Naive thymus-derived CD4-positive, alpha-beta T cell (primary cell): ENCODE measurements at regions of chr1 and their contacts with region 1.

Region 1: GRCh38 chr1:100351095-100351891 is 1.0 kb upstream of the CDC14A start:
- DNase-seq: peak; percentile 73 to 91 (median 85)
- ATAC-seq: peak; percentile 82
- H3K4me3 ChIP-seq: peak overlapping the region; percentile 94
- H3K4me3 Mint-ChIP-seq: peak overlapping the region; percentile 89 to 100 (median 98)
- H3K27ac ChIP-seq: peak overlapping the region; percentile 89
- H3K27ac Mint-ChIP-seq: peak overlapping the region; percentile 95 to 100 (median 98)
- H3K4me1 ChIP-seq: peaks cover 10 to 19% of the 10 kb centered on the region in 2 donors
- H3K4me1 Mint-ChIP-seq: peaks cover 23 to 35% (median 26%) of the 10 kb centered on the region in 7 donors
- H3K27me3 ChIP-seq: no peaks in the 10 kb centered on the region
- H3K27me3 Mint-ChIP-seq: peaks cover 0 to under 1% (median 0%) of the 10 kb centered on the region in 5 donors

Region 2: GRCh38 chr1:99808391-99809115 is 542.7 kb before region 1 on chr1:
- CTCF ChIA-PET with region 1: no interaction called
- POLR2A ChIA-PET with region 1: no interaction called
- intact Hi-C with region 1: loop called (anchors 1 to 5 kb)
- DNase-seq: peak in 7 of 9 donors; percentile 32 to 63 (median 55)
- ATAC-seq: peak; percentile 81
- H3K4me3 ChIP-seq: no peak overlapping the region
- H3K4me3 Mint-ChIP-seq: peak overlapping the region in 1 of 10 donors; percentile 16
- H3K27ac ChIP-seq: no peak overlapping the region
- H3K27ac Mint-ChIP-seq: no peak overlapping the region
- H3K4me1 ChIP-seq: no peaks in the 10 kb centered on the region
- H3K4me1 Mint-ChIP-seq: peaks cover 0 to 11% (median 4%) of the 10 kb centered on the region in 7 donors
- H3K27me3 ChIP-seq: no peaks in the 10 kb centered on the region
- H3K27me3 Mint-ChIP-seq: peaks cover 6 to 21% (median 8%) of the 10 kb centered on the region in 5 donors

Region 3: DNA sequence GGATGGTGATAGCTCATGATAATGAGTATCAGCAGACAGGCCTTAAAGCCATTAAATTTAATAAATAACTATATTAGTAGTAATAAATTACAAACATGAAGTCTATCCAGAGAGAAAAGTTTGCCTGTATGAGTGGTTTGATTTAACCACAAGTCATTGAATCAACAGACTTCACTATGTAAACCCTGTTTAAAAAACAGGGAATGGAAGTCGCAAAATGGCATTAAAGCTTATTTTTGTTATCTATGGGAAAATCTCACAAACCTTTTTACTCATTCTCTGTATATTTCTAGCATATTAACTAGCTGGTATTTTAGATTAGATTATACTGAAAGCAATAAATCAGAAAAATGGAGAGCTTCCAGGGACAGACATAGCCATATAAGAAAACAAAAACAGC is 263.9 kb before region 1 on chr1:
- CTCF ChIA-PET with region 1: no interaction called
- POLR2A ChIA-PET with region 1: no interaction called
- intact Hi-C with region 1: no loop called
- DNase-seq: no peak
- ATAC-seq: no peak
- H3K4me3 ChIP-seq: no peak overlapping the region
- H3K4me3 Mint-ChIP-seq: no peak overlapping the region
- H3K27ac ChIP-seq: no peak overlapping the region
- H3K27ac Mint-ChIP-seq: peak overlapping the region in 1 of 9 donors; percentile 33
- H3K4me1 ChIP-seq: no peaks in the 10 kb centered on the region
- H3K4me1 Mint-ChIP-seq: peaks cover 0 to 3% (median 0%) of the 10 kb centered on the region in 7 donors
- H3K27me3 ChIP-seq: no peaks in the 10 kb centered on the region
- H3K27me3 Mint-ChIP-seq: no peaks in the 10 kb centered on the region

Region 4: DNA sequence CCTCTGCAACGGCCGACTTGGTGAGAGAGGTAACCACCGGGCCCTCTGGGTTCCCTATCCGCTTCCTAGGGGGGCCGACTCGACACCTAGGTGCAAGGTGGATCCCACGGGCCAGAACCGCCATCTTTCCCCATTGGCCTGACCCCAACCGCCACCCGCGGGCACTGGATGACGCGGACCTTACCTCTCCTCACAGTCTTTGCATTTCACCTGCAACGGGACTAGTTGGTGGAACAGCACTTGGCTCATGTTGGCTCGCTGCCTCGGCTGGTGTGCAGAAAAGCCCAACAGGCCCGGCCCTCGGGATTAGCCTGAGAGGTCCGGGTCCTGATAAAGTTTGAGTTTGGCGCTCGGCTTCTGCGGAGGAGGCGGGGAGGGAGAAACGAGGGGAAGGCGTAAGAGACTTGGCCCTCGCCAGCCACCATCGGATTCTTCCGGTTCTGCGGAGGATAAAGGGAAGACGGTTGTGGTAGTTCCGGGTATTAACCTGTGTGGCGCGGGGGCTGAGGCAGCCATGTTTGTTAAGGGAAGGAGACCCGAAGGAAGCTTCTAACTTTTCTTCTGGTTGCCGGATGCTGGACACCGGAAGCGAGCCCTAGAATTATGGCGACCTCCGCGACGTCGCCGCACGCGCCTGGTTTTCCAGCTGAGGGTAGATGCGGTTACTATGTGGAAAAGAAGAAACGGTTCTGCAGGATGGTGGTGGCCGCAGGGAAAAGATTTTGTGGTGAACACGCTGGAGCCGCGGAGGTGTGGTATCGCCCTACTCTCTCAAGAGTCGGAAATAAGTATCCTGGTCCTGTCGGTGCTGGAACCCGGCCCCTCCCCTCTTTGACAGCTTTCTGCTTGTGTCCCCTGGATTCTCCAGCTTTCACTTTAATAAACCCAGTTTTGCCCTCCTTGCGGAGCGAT is 218.5 kb before region 1 on chr1 and contains the starts of genes SASS6 and TRMT13:
- CTCF ChIA-PET with region 1: no interaction called
- POLR2A ChIA-PET with region 1: interaction called, 4 read pairs
- intact Hi-C with region 1: loop called (anchors 1 kb)
- DNase-seq: peak; percentile 73 to 96 (median 94)
- ATAC-seq: peak; percentile 99
- H3K4me3 ChIP-seq: peak within 1 kb of the TSS; percentile 92
- H3K4me3 Mint-ChIP-seq: peak within 1 kb of the TSS; percentile 90 to 99 (median 98)
- H3K27ac ChIP-seq: peak within 1 kb of the TSS; percentile 74
- H3K27ac Mint-ChIP-seq: peak within 1 kb of the TSS; percentile 86 to 99 (median 96)
- H3K4me1 ChIP-seq: peaks cover 9 to 15% of the 10 kb centered on the region in 2 donors
- H3K4me1 Mint-ChIP-seq: peaks cover 7 to 53% (median 39%) of the 10 kb centered on the region in 7 donors
- H3K27me3 ChIP-seq: no peaks in the 10 kb centered on the region
- H3K27me3 Mint-ChIP-seq: no peaks in the 10 kb centered on the region
- total RNA-seq, gene SASS6: 2.5 to 11.6 (median 5.6) TPM
- total RNA-seq, gene TRMT13: 15.3 to 60.3 (median 23.9) TPM

Region 5: DNA sequence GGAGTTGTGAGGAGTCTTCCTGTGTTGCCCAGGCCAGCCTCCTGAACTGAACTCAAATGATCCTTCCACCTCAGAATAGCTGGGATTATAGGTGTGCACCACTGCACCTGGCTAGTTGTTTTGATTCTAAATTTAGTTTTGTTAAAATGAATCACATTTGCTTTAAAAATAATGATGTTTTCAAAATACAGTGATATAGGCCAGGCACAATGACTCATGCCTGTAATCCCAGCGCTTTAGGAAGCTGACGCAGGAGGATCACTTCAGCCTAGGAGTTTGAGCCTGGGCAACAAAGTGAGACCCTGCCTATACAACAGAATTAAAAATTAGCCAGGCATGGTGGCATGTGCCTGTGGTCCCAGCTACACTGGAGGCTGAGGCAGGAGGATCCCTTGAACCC is 61.0 kb before region 1 on chr1:
- CTCF ChIA-PET with region 1: interaction called, 10 read pairs
- POLR2A ChIA-PET with region 1: interaction called, 3 read pairs
- intact Hi-C with region 1: loop called in 1 of 2 experiments (anchors 5 kb)
- DNase-seq: no peak
- ATAC-seq: no peak
- H3K4me3 ChIP-seq: no peak overlapping the region
- H3K4me3 Mint-ChIP-seq: no peak overlapping the region
- H3K27ac ChIP-seq: no peak overlapping the region
- H3K27ac Mint-ChIP-seq: peak overlapping the region in 2 of 9 donors; percentile 16 to 57
- H3K4me1 ChIP-seq: no peaks in the 10 kb centered on the region
- H3K4me1 Mint-ChIP-seq: peaks cover 0 to 5% (median 3%) of the 10 kb centered on the region in 7 donors
- H3K27me3 ChIP-seq: no peaks in the 10 kb centered on the region
- H3K27me3 Mint-ChIP-seq: no peaks in the 10 kb centered on the region

Region 6: DNA sequence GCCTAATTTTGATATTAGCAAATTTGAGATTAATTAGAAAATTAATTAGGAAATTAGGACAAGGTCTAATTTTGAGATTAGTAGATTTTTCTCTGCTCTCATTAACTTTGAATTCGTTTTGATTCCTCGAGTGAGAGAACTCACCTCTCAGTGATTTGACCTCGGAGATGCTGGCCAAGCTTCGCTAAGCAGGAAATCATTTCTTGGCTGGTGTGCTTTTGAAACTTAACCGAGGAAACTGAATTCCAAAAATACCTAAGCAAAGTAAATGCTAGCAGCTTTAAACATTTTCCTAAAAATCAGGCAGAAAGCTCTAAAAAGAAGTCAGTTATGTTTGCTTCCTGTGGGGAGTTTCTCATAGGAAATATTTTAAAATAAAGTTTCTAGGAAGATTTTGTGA is 35.9 kb after region 1 on chr1:
- CTCF ChIA-PET with region 1: interaction called, 19 read pairs
- POLR2A ChIA-PET with region 1: interaction called, 196 read pairs
- intact Hi-C with region 1: no loop called
- DNase-seq: no peak
- ATAC-seq: no peak
- H3K4me3 ChIP-seq: peak overlapping the region; percentile 9
- H3K4me3 Mint-ChIP-seq: peak overlapping the region; percentile 53 to 86 (median 78)
- H3K27ac ChIP-seq: peak overlapping the region; percentile 77
- H3K27ac Mint-ChIP-seq: peak overlapping the region; percentile 60 to 96 (median 92)
- H3K4me1 ChIP-seq: peaks cover 56 to 68% of the 10 kb centered on the region in 2 donors
- H3K4me1 Mint-ChIP-seq: peaks cover 39 to 99% (median 90%) of the 10 kb centered on the region in 7 donors
- H3K27me3 ChIP-seq: no peaks in the 10 kb centered on the region
- H3K27me3 Mint-ChIP-seq: no peaks in the 10 kb centered on the region

Region 7: DNA sequence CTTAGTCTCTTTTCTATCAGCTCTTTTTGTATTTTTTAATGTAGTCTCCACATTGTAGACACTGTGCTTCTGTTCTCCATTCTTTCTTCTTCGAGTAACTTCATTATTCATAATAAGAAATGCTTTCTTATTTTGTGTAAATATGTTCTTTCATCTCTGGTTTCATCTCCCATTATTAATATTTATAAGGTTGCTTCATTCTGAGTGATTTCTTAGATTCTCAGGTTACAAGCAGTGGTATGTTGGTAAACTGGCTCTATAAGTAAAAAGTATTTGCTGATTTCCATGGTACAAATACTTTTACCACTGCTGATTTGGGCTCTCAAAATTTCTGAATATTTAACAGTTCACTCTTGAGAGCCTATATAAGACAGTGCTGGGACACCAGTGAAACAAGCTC is 82.3 kb after region 1 on chr1:
- CTCF ChIA-PET with region 1: no interaction called
- POLR2A ChIA-PET with region 1: interaction called, 10 read pairs
- intact Hi-C with region 1: no loop called
- DNase-seq: no peak
- ATAC-seq: no peak
- H3K4me3 ChIP-seq: no peak overlapping the region
- H3K4me3 Mint-ChIP-seq: peak overlapping the region in 2 of 10 donors; percentile 13 to 16
- H3K27ac ChIP-seq: peak overlapping the region; percentile 38
- H3K27ac Mint-ChIP-seq: peak overlapping the region in 8 of 9 donors; percentile 41 to 98 (median 84)
- H3K4me1 ChIP-seq: peaks cover 34 to 38% of the 10 kb centered on the region in 2 donors
- H3K4me1 Mint-ChIP-seq: peaks cover 31 to 82% (median 61%) of the 10 kb centered on the region in 7 donors
- H3K27me3 ChIP-seq: no peaks in the 10 kb centered on the region
- H3K27me3 Mint-ChIP-seq: no peaks in the 10 kb centered on the region

Region 8: DNA sequence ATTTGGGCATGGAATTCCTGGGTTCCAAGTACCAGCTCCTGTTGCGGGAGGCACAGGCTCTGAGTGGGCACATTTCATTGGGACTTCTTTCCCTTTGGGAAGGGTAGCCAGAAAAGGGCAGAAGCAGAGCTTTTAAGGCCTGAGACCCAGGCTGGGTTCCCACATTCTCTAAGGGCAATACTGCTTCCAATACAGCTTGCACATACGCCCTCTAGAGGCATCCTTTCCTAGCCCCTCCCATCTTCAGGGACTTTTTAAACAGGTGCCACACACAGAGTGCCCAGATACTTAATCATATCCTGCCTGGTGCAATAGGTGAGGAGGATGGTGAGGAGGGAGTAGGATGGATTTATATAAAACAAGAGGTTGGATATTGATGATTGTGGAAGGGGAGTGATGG is 192.3 kb after region 1 on chr1:
- CTCF ChIA-PET with region 1: no interaction called
- POLR2A ChIA-PET with region 1: no interaction called
- intact Hi-C with region 1: loop called in 1 of 2 experiments (anchors 5 kb)
- DNase-seq: peak in 5 of 9 donors; percentile 17 to 39 (median 25)
- ATAC-seq: peak; percentile 76
- H3K4me3 ChIP-seq: no peak overlapping the region
- H3K4me3 Mint-ChIP-seq: no peak overlapping the region
- H3K27ac ChIP-seq: no peak overlapping the region
- H3K27ac Mint-ChIP-seq: no peak overlapping the region
- H3K4me1 ChIP-seq: peaks cover 4% of the 10 kb centered on the region in 2 donors
- H3K4me1 Mint-ChIP-seq: peaks cover 0 to 12% (median 7%) of the 10 kb centered on the region in 7 donors
- H3K27me3 ChIP-seq: peaks cover 4 to 7% of the 10 kb centered on the region in 2 donors
- H3K27me3 Mint-ChIP-seq: peaks cover 23 to 54% (median 30%) of the 10 kb centered on the region in 5 donors